ENCODE measurements at regions of chr5 and their contacts with region 1.

Region 1: DNA sequence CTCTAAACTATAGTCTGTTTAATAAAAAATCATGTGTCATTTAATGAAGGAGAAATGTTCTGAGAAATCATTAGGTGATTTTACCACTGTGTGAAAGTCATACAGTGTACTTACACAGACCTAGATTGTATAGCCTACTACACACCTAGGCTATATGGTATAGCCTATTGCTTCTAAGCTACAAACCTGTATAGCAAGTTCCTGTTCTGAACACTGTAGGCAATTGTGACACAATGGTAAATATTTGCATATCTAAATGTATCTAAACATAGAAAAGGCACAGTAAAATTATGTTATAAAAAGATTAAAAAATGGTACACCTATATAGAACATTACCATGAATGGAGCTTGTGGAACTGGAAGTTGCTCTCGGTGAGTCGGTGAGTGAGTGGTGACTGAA is 40.5 kb downstream of the EFNA5 start:
- DNase-seq: no peak
- ATAC-seq: peak; percentile 43; the same call in 2 of the 3 replicates
- H3K4me3 ChIP-seq: no peak overlapping the region
- H3K27ac ChIP-seq: no peak overlapping the region
- H3K4me1 ChIP-seq: no peaks in the 10 kb centered on the region
- H3K27me3 ChIP-seq: no peaks in the 10 kb centered on the region
- CTCF ChIP-seq: no peak
- EP300 ChIP-seq: no peak
- POLR2A ChIP-seq: no peak
- RAD21 ChIP-seq: no peak

Region 2: DNA sequence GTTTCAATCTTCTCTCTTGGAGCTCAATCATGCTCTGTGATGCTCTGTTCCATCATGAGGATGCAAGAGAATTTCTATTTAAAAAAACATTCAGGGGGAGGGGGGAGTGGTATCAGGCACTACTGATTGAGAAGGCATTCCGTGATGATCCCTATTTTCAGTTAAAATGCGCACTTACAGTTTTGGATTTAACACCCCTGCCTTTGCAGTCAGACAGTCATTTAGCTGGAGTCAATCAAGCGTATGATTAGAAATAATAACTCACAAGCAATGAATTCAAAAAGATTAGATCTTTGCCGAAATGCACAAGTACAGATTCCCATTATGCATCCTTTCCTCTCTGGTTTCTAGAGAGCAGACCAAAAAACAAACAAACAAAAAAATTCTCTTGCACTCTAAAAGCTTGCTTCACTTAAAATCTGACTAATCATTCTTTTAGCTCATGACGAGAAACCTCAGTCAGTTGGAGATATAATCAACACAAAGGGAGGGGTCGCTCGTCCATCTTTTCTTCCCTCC is 14.8 kb before region 1 on chr5:
- CTCF ChIA-PET with region 1: interaction called, 10 read pairs
- POLR2A ChIA-PET with region 1: interaction called, 3 read pairs
- RAD21 ChIA-PET with region 1: no interaction called
- SMC1A ChIA-PET with region 1: interaction called, 27 read pairs
- in situ Hi-C with region 1: no loop called
- intact Hi-C with region 1: no loop called
- DNase-seq: no peak
- ATAC-seq: no peak
- H3K4me3 ChIP-seq: no peak overlapping the region
- H3K27ac ChIP-seq: no peak overlapping the region
- H3K4me1 ChIP-seq: no peaks in the 10 kb centered on the region
- H3K27me3 ChIP-seq: no peaks in the 10 kb centered on the region
- CTCF ChIP-seq: no peak
- EP300 ChIP-seq: no peak
- POLR2A ChIP-seq: no peak
- RAD21 ChIP-seq: no peak

Region 3: DNA sequence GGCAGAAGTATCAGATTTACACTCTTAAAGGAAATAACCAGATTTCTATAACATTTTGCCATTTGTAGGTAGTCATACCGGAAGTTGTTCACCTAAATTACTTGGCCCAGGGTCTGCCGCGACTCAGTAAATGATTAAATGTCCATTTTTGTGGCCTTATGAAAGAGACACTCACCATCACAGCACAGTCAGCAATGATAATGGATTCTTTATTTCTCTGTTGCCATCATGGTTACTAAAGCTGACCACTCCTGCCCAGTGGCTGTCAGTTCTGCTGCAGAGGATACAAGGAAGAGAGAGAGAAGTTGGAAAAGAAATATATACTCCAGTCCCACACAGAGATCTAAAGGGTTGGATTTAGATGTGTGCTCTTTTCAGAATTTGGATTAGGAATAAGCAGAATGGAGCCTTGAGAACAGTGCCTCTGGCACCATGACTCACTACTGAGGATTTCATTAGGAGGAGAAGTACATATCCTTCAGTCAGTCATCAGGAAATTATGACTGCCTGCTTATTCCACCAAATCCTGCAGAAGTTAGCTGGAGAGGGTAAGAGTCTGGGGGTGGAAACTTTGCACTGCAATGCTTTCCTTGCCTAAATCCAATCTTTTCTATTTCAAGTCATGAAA is 113.3 kb after region 1 on chr5:
- CTCF ChIA-PET with region 1: no interaction called
- POLR2A ChIA-PET with region 1: no interaction called
- RAD21 ChIA-PET with region 1: no interaction called
- SMC1A ChIA-PET with region 1: no interaction called
- in situ Hi-C with region 1: no loop called
- intact Hi-C with region 1: no loop called
- DNase-seq: no peak
- ATAC-seq: no peak
- H3K4me3 ChIP-seq: no peak overlapping the region
- H3K27ac ChIP-seq: no peak overlapping the region
- H3K4me1 ChIP-seq: no peaks in the 10 kb centered on the region
- H3K27me3 ChIP-seq: no peaks in the 10 kb centered on the region; a peak in 1 of 4 replicates
- CTCF ChIP-seq: no peak
- EP300 ChIP-seq: no peak
- POLR2A ChIP-seq: no peak
- RAD21 ChIP-seq: no peak

Measured in GM12878 (cell line).